Caco-2 (cell line): ENCODE measurements at regions of chr6 and their contacts with region 1.

Region 1: GRCh38 chr6:131470534-131470933 is 102.5 kb upstream of the ARG1 start:
- DNase-seq: no peak
- H3K4me3 ChIP-seq: no peak overlapping the region
- H3K4me3 Mint-ChIP-seq: no peak overlapping the region
- H3K27ac Mint-ChIP-seq: no peak overlapping the region
- H3K4me1 ChIP-seq: no peaks in the 10 kb centered on the region
- H3K4me1 Mint-ChIP-seq: no peaks in the 10 kb centered on the region
- H3K27me3 ChIP-seq: no peaks in the 10 kb centered on the region
- H3K27me3 Mint-ChIP-seq: no peaks in the 10 kb centered on the region
- CTCF ChIP-seq: no peak

Region 2: GRCh38 chr6:131368198-131368911 is 102.2 kb before region 1 on chr6:
- CTCF ChIA-PET with region 1: no interaction called
- POLR2A ChIA-PET with region 1: no interaction called
- intact Hi-C with region 1: loop called (anchors 10 kb)
- DNase-seq: no peak
- H3K4me3 ChIP-seq: no peak overlapping the region
- H3K4me3 Mint-ChIP-seq: no peak overlapping the region
- H3K27ac Mint-ChIP-seq: no peak overlapping the region
- H3K4me1 ChIP-seq: peaks cover 21% of the 10 kb centered on the region; the same call in 1 of the 2 replicates
- H3K4me1 Mint-ChIP-seq: peaks cover 5% of the 10 kb centered on the region
- H3K27me3 ChIP-seq: no peaks in the 10 kb centered on the region
- H3K27me3 Mint-ChIP-seq: no peaks in the 10 kb centered on the region
- CTCF ChIP-seq: no peak